Activated CD4-positive, alpha-beta memory T cell treated with anti-CD3 and anti-CD28 coated beads for 36 hours (primary cell): ENCODE measurements at regions of chr17 and their contacts with region 1.

Region 1: DNA sequence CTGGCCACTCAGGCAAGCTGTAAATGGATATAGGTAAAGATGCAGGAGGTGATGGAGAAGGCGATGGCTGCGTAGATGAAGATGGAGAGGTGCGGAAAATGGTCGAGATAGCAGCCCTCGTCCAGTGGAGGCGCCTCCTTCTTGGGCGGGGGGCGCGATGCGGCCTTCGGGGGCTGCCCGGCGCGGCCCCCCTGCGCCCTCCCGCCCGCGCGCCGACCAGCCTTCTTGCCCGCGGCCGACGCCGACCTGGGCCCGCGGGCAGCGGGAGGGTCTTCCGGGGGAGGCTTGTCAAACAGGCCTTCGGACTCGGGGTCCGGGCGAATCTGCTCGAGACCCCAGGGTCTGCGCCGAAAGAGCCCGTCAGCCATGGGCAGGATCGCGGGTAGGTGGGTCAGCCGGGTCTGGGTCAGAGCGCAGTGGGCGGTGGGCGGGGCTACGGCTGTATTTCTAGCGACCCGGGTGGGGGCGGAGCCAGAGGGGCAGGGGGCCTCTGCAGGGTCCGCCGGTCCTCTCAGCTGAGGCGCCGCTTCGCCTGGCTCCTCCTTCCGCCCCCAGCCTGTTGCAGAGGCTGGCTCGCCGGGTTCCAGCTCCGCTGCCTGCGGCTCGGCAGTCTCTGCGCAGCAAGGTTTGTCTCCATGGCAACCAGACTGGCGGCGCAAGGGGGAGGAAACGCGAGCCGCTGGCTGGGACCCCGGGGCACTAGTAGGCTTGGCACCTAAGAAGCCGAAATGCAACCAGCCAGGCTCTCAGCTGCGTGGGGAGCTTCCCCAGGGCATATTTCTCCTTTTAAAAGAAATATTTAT is 14.4 kb downstream of the MIS12 start:
- DNase-seq: peak; percentile 83
- H3K4me3 Mint-ChIP-seq: peak overlapping the region; percentile 89
- H3K27ac Mint-ChIP-seq: no peak overlapping the region
- H3K4me1 Mint-ChIP-seq: peaks cover 12% of the 10 kb centered on the region
- H3K27me3 Mint-ChIP-seq: no peaks in the 10 kb centered on the region

Region 2: GRCh38 chr17:5526821-5527598 is 26.2 kb after region 1 on chr17:
- CTCF ChIA-PET with region 1: no interaction called
- POLR2A ChIA-PET with region 1: no interaction called
- intact Hi-C with region 1: loop called (anchors 2 kb)
- DNase-seq: peak; percentile 86
- H3K4me3 Mint-ChIP-seq: no peak overlapping the region
- H3K27ac Mint-ChIP-seq: peak overlapping the region; percentile 79
- H3K4me1 Mint-ChIP-seq: peaks cover 15% of the 10 kb centered on the region
- H3K27me3 Mint-ChIP-seq: no peaks in the 10 kb centered on the region